Right ventricle myocardium inferior (tissue), 1 donor: ENCODE measurements at regions of chr6 and their contacts with region 1.

Region 1: DNA sequence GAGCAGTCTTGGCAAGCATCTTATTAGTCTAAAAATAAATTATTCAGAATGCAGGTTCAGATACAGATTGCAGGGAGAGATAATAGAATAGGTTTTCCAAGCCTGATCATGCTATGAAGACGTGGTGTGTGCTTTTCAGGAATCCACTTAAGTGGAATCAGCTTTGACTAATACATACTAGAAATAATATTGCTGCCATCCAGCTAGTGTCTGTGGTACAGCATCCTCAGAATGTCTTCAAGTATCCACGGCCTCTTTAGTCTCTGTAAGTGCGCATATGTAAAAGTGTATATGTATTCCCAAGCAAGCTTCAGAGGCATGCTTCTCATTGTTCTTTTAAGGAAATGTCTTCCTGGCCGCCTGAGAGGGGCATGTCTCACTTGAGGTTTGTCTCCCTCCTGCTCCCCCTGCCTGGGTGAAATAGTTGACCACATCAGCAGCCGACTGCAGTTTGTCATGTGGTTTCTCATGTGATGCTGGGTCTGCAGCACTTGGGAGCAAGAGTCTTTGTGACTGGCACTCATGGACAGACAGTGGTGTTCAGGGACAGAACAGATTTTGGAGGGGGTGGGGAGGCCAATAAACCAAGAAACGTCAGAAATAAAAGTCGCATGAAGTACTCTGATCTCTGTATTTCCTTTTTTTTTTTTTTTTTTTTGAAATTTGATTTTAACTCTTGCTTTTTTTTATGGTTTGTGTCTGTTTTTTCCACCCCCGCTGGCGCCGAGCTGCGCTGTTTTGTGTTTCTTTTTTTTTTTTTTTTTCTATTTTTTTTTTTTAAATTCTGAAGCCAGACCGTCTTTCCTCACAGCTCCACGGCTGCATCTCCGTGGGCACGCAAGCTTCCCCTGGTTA is 150.8 kb downstream of the PRL start:
- DNase-seq: no peak
- ATAC-seq: peak; percentile 29

Region 2: DNA sequence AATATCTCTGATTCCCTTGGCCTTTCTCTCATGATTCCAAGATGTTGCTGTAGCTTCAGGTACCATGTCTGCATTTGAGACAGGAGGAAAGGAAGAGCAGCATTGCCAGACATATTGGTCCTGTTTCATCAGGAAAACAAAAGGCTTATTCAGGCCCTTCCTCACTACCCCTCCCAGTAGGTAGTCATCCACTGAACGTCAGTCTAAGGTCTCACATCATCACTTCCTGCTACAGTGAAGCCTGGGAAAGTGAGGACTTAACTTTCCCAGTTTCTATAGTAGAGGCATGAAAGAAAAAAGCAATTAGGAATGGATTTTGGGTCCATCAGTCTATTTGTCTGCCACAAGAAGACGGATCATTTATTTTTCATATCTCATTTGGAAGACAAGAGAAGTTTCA is 638.2 kb before region 1 on chr6:
- intact Hi-C with region 1: no loop called
- DNase-seq: no peak
- ATAC-seq: no peak

Region 3: GRCh38 chr6:21987501-21987957 is 158.5 kb before region 1 on chr6:
- intact Hi-C with region 1: loop called (anchors 10 kb)
- DNase-seq: peak; percentile 70
- ATAC-seq: peak; percentile 96

Region 4: GRCh38 chr6:22068561-22069305 is 77.3 kb before region 1 on chr6:
- intact Hi-C with region 1: loop called (anchors 5 kb)
- DNase-seq: no peak
- ATAC-seq: no peak

Region 5: GRCh38 chr6:22471132-22471690 is 325.2 kb after region 1 on chr6:
- intact Hi-C with region 1: loop called (anchors 10 kb)
- DNase-seq: no peak
- ATAC-seq: peak; percentile 82

Region 6: GRCh38 chr6:22668307-22668706 is 522.3 kb after region 1 on chr6:
- intact Hi-C with region 1: loop called (anchors 5 kb)
- DNase-seq: no peak
- ATAC-seq: peak; percentile 96

Region 7: GRCh38 chr6:22828179-22829062 is 682.4 kb after region 1 on chr6:
- intact Hi-C with region 1: loop called (anchors 10 kb)
- DNase-seq: no peak
- ATAC-seq: peak; percentile 72